ENCODE measurements at regions of chr20 and their contacts with region 1.

Region 1: GRCh38 chr20:50115591-50116372 is 2.8 kb upstream of the UBE2V1 start:
- DNase-seq: peak; percentile 75 to 95 (median 90)
- ATAC-seq: peak; percentile 78
- H3K4me3 ChIP-seq: peak overlapping the region; percentile 47 to 55
- H3K4me3 Mint-ChIP-seq: peak overlapping the region; percentile 87
- H3K27ac ChIP-seq: peak overlapping the region; percentile 22 to 25
- H3K27ac Mint-ChIP-seq: peak overlapping the region; percentile 84
- H3K4me1 ChIP-seq: peaks cover 39% of the 10 kb centered on the region
- H3K4me1 Mint-ChIP-seq: peaks cover 53% of the 10 kb centered on the region
- H3K27me3 ChIP-seq: no peaks in the 10 kb centered on the region
- H3K27me3 Mint-ChIP-seq: no peaks in the 10 kb centered on the region
- CTCF ChIP-seq: no peak

Region 2: DNA sequence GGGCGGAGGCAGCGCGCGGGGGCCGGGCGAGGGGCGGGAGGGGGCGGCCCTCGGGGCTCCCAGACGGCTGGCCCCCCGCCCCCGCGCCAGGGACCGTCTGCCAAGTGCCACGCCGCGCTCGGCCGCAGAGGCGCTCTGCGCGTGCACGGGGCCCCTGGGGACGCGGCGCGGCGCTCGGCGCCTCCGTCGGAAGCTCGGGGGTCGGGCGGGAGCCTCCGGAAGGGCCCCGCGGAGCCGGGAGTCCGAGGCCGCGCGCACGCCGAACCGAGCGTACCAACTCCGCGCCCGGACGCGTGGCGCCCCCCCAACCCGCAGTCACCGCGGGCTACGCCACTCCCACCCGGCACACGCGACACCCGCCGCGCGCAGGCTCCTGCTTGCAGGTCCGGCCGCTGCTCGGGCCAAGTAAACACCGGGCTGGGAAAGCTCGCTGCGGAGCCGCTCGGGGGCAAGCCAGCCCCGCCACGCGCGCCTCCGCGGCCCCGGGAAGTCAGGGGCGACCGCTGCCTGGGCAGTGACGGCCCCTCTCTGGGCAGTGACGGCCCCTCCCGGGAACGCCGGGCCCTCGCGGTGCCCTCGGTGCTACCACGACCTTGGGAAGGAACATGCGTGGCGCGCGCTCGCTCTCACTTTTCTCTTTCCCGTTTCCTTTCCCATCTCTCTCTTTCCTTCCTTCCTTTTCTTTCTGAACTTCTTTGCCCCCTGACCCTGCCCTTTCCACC is 1287.6 kb before region 1 on chr20:
- CTCF ChIA-PET with region 1: no interaction called
- POLR2A ChIA-PET with region 1: no interaction called
- intact Hi-C with region 1: loop called in 1 of 2 experiments (anchors 10 kb)
- DNase-seq: peak; percentile 72 to 94 (median 83)
- ATAC-seq: peak; percentile 69
- H3K4me3 ChIP-seq: peak overlapping the region in 1 of 2 experiments; percentile 49
- H3K4me3 Mint-ChIP-seq: peak overlapping the region; percentile 86
- H3K27ac ChIP-seq: peak overlapping the region; percentile 39 to 47
- H3K27ac Mint-ChIP-seq: peak overlapping the region; percentile 90
- H3K4me1 ChIP-seq: peaks cover 33% of the 10 kb centered on the region
- H3K4me1 Mint-ChIP-seq: peaks cover 35% of the 10 kb centered on the region
- H3K27me3 ChIP-seq: no peaks in the 10 kb centered on the region
- H3K27me3 Mint-ChIP-seq: no peaks in the 10 kb centered on the region
- CTCF ChIP-seq: no peak

Region 3: GRCh38 chr20:49915378-49916145 is 200.2 kb before region 1 on chr20 and contains the start of gene SPATA2:
- CTCF ChIA-PET with region 1: no interaction called
- POLR2A ChIA-PET with region 1: no interaction called
- intact Hi-C with region 1: loop called in 1 of 2 experiments (anchors 1 kb)
- DNase-seq: peak; percentile 87 to 98 (median 95)
- ATAC-seq: peak; percentile 75
- H3K4me3 ChIP-seq: peak within 1 kb of the TSS; percentile 67 to 100
- H3K4me3 Mint-ChIP-seq: peak within 1 kb of the TSS; percentile 98
- H3K27ac ChIP-seq: peak within 1 kb of the TSS; percentile 99 to 100
- H3K27ac Mint-ChIP-seq: peak within 1 kb of the TSS; percentile 100
- H3K4me1 ChIP-seq: peaks cover 21% of the 10 kb centered on the region
- H3K4me1 Mint-ChIP-seq: peaks cover 39% of the 10 kb centered on the region
- H3K27me3 ChIP-seq: no peaks in the 10 kb centered on the region
- H3K27me3 Mint-ChIP-seq: no peaks in the 10 kb centered on the region
- CTCF ChIP-seq: no peak
- total RNA-seq, gene SPATA2: 20.9 to 22.4 TPM

Region 4: GRCh38 chr20:50146732-50147662 is 31.2 kb after region 1 on chr20:
- CTCF ChIA-PET with region 1: interaction called, 59 read pairs
- POLR2A ChIA-PET with region 1: interaction called, 10 read pairs
- intact Hi-C with region 1: loop called (anchors 1 to 2 kb)
- DNase-seq: peak; percentile 55 to 94 (median 79)
- ATAC-seq: peak; percentile 100
- H3K4me3 ChIP-seq: peak overlapping the region; percentile 32 to 34
- H3K4me3 Mint-ChIP-seq: peak overlapping the region; percentile 79
- H3K27ac ChIP-seq: peak overlapping the region; percentile 87 to 93
- H3K27ac Mint-ChIP-seq: peak overlapping the region; percentile 97
- H3K4me1 ChIP-seq: peaks cover 48% of the 10 kb centered on the region
- H3K4me1 Mint-ChIP-seq: peaks cover 65% of the 10 kb centered on the region
- H3K27me3 ChIP-seq: no peaks in the 10 kb centered on the region
- H3K27me3 Mint-ChIP-seq: no peaks in the 10 kb centered on the region
- CTCF ChIP-seq: no peak

Region 5: GRCh38 chr20:50179507-50180016 is 63.8 kb after region 1 on chr20:
- CTCF ChIA-PET with region 1: interaction called, 125 read pairs
- POLR2A ChIA-PET with region 1: no interaction called
- intact Hi-C with region 1: loop called in 1 of 2 experiments (anchors 2 kb)
- DNase-seq: no peak
- ATAC-seq: peak; percentile 24
- H3K4me3 ChIP-seq: no peak overlapping the region
- H3K4me3 Mint-ChIP-seq: no peak overlapping the region
- H3K27ac ChIP-seq: no peak overlapping the region
- H3K27ac Mint-ChIP-seq: no peak overlapping the region
- H3K4me1 ChIP-seq: no peaks in the 10 kb centered on the region
- H3K4me1 Mint-ChIP-seq: no peaks in the 10 kb centered on the region
- H3K27me3 ChIP-seq: no peaks in the 10 kb centered on the region
- H3K27me3 Mint-ChIP-seq: peaks cover 7% of the 10 kb centered on the region
- CTCF ChIP-seq: peak; percentile 58

Region 6: DNA sequence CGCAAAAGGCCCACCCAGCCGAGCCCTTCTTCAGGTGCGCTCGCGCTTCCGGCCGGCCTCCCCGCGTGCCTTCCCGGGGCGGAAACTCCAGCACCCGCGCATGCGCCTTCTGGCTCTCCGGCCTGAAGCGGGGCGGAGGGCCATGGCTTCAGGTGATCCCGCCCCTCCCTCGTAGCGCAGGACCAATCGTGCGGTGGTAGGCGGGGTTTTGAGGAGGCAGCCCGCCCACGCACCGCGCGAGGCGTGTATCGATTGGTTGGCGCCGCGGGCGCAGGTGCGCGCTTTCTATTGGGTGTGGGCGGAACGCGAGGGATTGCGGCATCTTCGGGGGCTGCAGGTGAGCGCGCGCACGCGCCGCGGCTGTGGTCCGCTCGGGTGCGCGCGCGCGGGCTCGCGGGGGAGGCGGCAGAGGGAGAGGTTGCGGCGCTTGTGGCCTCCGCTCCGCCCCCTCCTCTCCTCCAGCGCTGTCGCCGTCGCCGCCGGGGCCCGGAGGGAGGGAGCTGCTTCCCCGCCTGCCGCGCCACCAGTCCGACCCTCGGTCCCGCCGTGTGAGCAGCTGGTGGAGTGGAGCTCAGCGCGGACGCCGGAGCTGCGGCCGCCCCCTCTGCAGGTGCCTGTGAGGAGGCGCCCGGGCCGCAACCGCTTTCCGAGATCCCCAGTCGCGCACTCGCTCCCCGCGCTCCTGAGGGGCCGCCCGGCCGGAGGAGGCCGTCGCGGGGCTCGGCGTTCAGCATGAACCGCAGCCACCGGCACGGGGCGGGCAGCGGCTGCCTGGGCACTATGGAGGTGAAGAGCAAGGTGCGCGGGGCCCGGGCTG is 615.5 kb after region 1 on chr20 and contains the start of gene PARD6B:
- CTCF ChIA-PET with region 1: no interaction called
- POLR2A ChIA-PET with region 1: no interaction called
- intact Hi-C with region 1: loop called in 1 of 2 experiments (anchors 5 kb)
- DNase-seq: peak; percentile 98 to 100 (median 99)
- ATAC-seq: peak; percentile 96
- H3K4me3 ChIP-seq: peak within 1 kb of the TSS; percentile 72 to 81
- H3K4me3 Mint-ChIP-seq: peak within 1 kb of the TSS; percentile 91
- H3K27ac ChIP-seq: peak within 1 kb of the TSS; percentile 51 to 54
- H3K27ac Mint-ChIP-seq: peak within 1 kb of the TSS; percentile 86
- H3K4me1 ChIP-seq: peaks cover 16% of the 10 kb centered on the region
- H3K4me1 Mint-ChIP-seq: peaks cover 34% of the 10 kb centered on the region
- H3K27me3 ChIP-seq: no peaks in the 10 kb centered on the region
- H3K27me3 Mint-ChIP-seq: no peaks in the 10 kb centered on the region
- CTCF ChIP-seq: no peak
- total RNA-seq, gene PARD6B: 5.6 to 6.3 TPM

Measured in CD8-positive, alpha-beta T cell (primary cell).